Activated naive CD8-positive, alpha-beta T cell treated with anti-CD3 and anti-CD28 coated beads, Interleukin-2, amount 10 ng/mL, durations not matched to agents 7 days and 5 days (primary cell): ENCODE measurements at regions of chr17 and their contacts with region 1.

Region 1: GRCh38 chr17:76557368-76558197 is 17.7 kb downstream of the PRCD start:
- DNase-seq: peak; percentile 90
- ATAC-seq: peak; percentile 91
- H3K4me3 Mint-ChIP-seq: peak overlapping the region; percentile 98
- H3K27ac Mint-ChIP-seq: peak overlapping the region; percentile 99
- H3K4me1 Mint-ChIP-seq: peaks cover 46% of the 10 kb centered on the region
- H3K27me3 Mint-ChIP-seq: no peaks in the 10 kb centered on the region

Region 2: GRCh38 chr17:76527430-76528111 is 30.0 kb before region 1 on chr17:
- POLR2A ChIA-PET with region 1: interaction called, 12 read pairs
- DNase-seq: peak; percentile 61
- ATAC-seq: peak; percentile 76
- H3K4me3 Mint-ChIP-seq: peak overlapping the region; percentile 70
- H3K27ac Mint-ChIP-seq: peak overlapping the region; percentile 86
- H3K4me1 Mint-ChIP-seq: peaks cover 17% of the 10 kb centered on the region
- H3K27me3 Mint-ChIP-seq: no peaks in the 10 kb centered on the region

Region 3: GRCh38 chr17:76567634-76568432 is 10.2 kb after region 1 on chr17:
- POLR2A ChIA-PET with region 1: interaction called, 21 read pairs
- DNase-seq: no peak
- ATAC-seq: no peak
- H3K4me3 Mint-ChIP-seq: no peak overlapping the region
- H3K27ac Mint-ChIP-seq: no peak overlapping the region
- H3K4me1 Mint-ChIP-seq: peaks cover 21% of the 10 kb centered on the region
- H3K27me3 Mint-ChIP-seq: no peaks in the 10 kb centered on the region

Region 4: DNA sequence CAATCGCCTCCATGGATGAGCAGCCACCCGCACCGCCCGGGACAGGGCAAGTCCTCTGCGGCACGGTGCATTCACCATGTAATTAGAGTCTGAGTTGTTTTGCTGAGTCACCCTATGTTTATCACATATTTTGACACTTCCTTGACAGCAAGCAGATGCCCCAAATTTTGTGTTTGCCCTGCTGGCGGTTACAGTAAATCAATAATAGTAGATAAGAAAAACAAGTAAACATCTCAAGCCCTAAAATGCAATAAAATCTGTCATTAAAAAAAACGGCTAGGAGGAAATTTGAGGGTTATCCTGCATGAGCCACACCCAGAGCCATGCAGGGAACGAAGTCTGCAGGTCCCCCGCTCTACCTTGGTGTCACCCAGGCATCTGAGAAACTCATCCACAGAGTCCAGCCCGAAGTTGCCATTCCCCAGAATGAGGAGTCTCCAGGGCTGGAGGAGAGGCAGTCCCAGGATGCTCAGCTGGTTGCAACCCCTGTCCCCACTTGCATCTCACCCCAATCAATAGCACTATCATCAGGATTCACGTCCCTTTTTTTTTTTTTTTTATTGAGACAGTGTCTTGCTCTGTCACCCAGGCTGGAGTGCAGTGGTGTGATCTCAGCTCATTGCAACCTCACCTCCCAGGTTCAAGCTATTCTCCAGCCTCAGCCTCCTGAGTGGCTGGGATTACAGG is 102.5 kb after region 1 on chr17:
- POLR2A ChIA-PET with region 1: no interaction called
- DNase-seq: no peak
- ATAC-seq: no peak
- H3K4me3 Mint-ChIP-seq: no peak overlapping the region
- H3K27ac Mint-ChIP-seq: peak overlapping the region; percentile 51
- H3K4me1 Mint-ChIP-seq: peaks cover 18% of the 10 kb centered on the region
- H3K27me3 Mint-ChIP-seq: peaks cover 9% of the 10 kb centered on the region

Region 5: GRCh38 chr17:76671123-76671911 is 113.7 kb after region 1 on chr17:
- POLR2A ChIA-PET with region 1: interaction called, 22 read pairs
- DNase-seq: peak; percentile 97
- ATAC-seq: peak; percentile 99
- H3K4me3 Mint-ChIP-seq: peak overlapping the region; percentile 89
- H3K27ac Mint-ChIP-seq: peak overlapping the region; percentile 96
- H3K4me1 Mint-ChIP-seq: peaks cover 32% of the 10 kb centered on the region
- H3K27me3 Mint-ChIP-seq: peaks cover 2% of the 10 kb centered on the region

Region 6: GRCh38 chr17:76726231-76726775 is 168.7 kb after region 1 on chr17 and contains the start of gene JMJD6:
- POLR2A ChIA-PET with region 1: interaction called, 11 read pairs
- DNase-seq: no peak
- ATAC-seq: peak; percentile 83
- H3K4me3 Mint-ChIP-seq: peak within 1 kb of the TSS; percentile 99
- H3K27ac Mint-ChIP-seq: peak within 1 kb of the TSS; percentile 99
- H3K4me1 Mint-ChIP-seq: peaks cover 38% of the 10 kb centered on the region
- H3K27me3 Mint-ChIP-seq: no peaks in the 10 kb centered on the region
- total RNA-seq, gene JMJD6: 55.0 to 58.9 TPM